Caco-2 (cell line): ENCODE measurements at regions of chr15 and their contacts with region 1.

Region 1: GRCh38 chr15:82689147-82689546 is 20.5 kb downstream of the AP3B2 start:
- DNase-seq: no peak
- H3K4me3 ChIP-seq: no peak overlapping the region
- H3K4me3 Mint-ChIP-seq: no peak overlapping the region
- H3K27ac Mint-ChIP-seq: no peak overlapping the region
- H3K4me1 ChIP-seq: no peaks in the 10 kb centered on the region
- H3K4me1 Mint-ChIP-seq: no peaks in the 10 kb centered on the region
- H3K27me3 ChIP-seq: no peaks in the 10 kb centered on the region
- H3K27me3 Mint-ChIP-seq: peaks cover 12% of the 10 kb centered on the region
- CTCF ChIP-seq: no peak

Region 2: GRCh38 chr15:83210614-83211013 is 521.5 kb after region 1 on chr15:
- CTCF ChIA-PET with region 1: interaction called, 10 read pairs
- POLR2A ChIA-PET with region 1: no interaction called
- intact Hi-C with region 1: no loop called
- DNase-seq: no peak
- H3K4me3 ChIP-seq: no peak overlapping the region
- H3K4me3 Mint-ChIP-seq: no peak overlapping the region
- H3K27ac Mint-ChIP-seq: no peak overlapping the region
- H3K4me1 ChIP-seq: 0 out of 2 replicates have a peak, but pooled peaks cover 6% of the 10 kb centered on the region
- H3K4me1 Mint-ChIP-seq: peaks cover 5% of the 10 kb centered on the region
- H3K27me3 ChIP-seq: no peaks in the 10 kb centered on the region; the same call in 1 of the 2 replicates
- H3K27me3 Mint-ChIP-seq: peaks cover 3% of the 10 kb centered on the region
- CTCF ChIP-seq: no peak